ENCODE measurements at regions of chr6 and their contacts with region 1.

Region 1: GRCh38 chr6:42104095-42104806 is 38.2 kb downstream of the C6orf132 start:
- DNase-seq: peak; percentile 77
- H3K4me3 Mint-ChIP-seq: peak overlapping the region; percentile 60
- H3K27ac Mint-ChIP-seq: peak overlapping the region; percentile 52
- H3K4me1 Mint-ChIP-seq: peaks cover 19% of the 10 kb centered on the region
- H3K27me3 Mint-ChIP-seq: peaks cover 54% of the 10 kb centered on the region

Region 2: GRCh38 chr6:41756354-41756753 is 347.9 kb before region 1 on chr6:
- CTCF ChIA-PET with region 1: no interaction called
- DNase-seq: peak; percentile 40
- H3K4me3 Mint-ChIP-seq: no peak overlapping the region
- H3K27ac Mint-ChIP-seq: no peak overlapping the region
- H3K4me1 Mint-ChIP-seq: no peaks in the 10 kb centered on the region
- H3K27me3 Mint-ChIP-seq: peaks cover 22% of the 10 kb centered on the region

Region 3: DNA sequence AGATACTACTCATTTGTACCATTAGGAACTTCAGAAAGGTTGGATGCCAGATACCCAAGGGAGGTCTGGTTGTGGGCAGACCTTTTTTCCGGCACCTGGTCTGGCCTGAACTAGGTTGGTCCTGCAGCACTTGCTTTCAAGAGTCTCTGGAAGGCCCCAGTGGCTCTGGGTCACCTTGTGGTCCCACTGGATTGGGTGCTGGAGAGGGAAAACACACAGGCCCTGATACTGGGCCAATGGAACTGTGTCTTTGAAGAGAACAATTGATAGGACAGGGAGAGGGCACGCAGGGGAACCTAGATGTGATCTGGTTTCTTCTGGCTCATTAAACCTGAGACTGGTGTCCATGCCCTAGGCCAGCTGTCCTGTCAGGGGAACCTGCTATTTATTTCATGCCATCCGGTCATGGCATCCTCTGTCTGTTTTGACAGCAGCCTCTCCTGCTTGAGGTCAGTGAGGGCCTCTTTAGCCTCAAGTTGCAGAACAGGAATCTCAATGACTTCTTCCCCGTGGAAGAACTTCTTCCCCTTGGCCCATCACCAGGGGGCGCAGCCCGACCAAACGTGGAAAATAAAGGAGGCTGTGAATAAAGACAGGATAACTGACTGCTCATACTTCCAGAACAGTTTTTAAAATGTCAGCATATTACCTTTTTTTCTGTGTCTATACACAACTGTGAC is 29.0 kb before region 1 on chr6:
- CTCF ChIA-PET with region 1: interaction called, 10 read pairs
- DNase-seq: peak; percentile 71
- H3K4me3 Mint-ChIP-seq: no peak overlapping the region
- H3K27ac Mint-ChIP-seq: no peak overlapping the region
- H3K4me1 Mint-ChIP-seq: no peaks in the 10 kb centered on the region
- H3K27me3 Mint-ChIP-seq: no peaks in the 10 kb centered on the region

Region 4: DNA sequence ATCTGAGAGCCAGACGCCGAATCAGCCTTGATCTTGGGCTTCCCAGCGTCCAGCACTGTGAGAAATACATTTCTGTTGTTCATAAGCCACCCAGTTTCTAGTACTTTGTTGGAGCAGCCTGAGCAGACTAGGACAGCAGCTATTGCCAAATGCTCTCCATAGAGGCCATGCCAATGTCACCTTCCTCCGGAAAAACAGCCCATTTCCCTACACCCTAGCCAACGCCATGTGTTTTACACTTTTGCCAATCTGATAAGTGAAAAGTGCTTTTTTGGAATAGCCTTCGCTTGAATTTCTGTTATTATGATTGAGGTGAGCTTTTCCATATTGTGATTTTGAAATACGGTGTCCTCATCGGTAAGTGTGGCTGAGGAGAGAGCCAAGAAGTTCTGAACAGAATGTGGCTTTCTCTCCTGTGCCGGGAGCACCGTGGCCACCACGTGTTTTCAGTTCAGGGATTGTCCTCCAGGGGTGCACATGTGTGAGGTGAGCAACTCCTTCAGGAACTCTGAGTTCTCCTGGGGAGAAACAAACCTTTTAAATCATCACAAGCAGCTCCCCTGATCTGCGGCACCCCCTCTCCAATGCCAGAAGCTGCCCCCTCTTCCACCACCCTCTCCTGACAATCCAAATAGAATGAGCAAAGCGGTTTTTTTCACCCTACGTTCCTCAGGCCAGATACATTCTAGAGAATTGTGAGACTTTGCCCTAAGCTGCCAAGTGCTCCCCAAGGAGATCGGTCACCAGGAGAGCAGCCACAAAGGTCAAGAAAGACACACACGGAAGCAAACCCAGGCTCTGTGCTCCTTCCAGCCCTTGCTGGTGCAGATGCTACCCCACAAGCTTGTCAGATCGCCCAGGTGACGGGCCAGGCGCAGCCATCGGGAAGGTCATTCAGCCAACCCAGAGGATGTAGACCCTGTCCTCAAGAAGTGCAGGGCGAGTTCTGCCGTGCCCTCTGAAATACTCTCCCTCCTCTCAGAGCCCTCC is 17.9 kb before region 1 on chr6:
- CTCF ChIA-PET with region 1: interaction called, 14 read pairs
- DNase-seq: no peak
- H3K4me3 Mint-ChIP-seq: no peak overlapping the region
- H3K27ac Mint-ChIP-seq: no peak overlapping the region
- H3K4me1 Mint-ChIP-seq: no peaks in the 10 kb centered on the region
- H3K27me3 Mint-ChIP-seq: no peaks in the 10 kb centered on the region

Region 5: DNA sequence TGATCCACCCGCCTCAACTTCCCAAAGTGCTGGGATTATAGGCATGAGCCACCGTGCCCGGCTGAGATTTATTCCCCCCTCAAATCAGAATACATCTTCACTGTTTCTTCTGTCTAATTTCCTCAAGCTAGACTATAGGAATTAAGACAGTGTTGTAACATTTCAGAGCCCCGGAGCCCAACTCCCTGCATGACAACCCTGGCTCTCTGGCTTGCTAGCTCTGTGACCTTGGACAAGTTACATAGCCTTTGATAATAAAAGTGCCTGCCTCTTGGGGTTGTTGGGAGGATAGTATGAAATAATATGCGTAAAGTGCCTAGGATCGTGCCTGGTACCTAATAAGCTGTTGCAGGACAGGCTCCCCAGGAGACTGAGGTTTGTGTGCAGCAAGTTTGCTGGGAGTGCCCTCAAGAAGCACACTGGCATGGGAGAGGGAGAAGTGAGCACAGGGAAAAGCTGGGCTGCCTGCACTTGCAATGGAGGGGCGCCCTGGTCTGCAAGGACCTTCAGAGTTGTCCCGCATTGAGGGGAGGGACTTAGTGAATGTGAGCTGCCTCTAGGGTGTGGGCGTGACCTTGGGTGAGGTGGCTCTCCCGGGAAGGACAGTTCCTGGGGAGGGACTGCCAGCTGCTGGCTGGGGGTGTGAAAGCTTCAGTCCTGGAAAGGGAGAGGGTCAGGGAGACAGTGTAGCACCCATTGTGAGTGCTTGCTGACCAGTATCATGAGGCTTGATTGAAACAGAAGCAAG is 10.5 kb before region 1 on chr6:
- CTCF ChIA-PET with region 1: interaction called, 18 read pairs
- DNase-seq: no peak
- H3K4me3 Mint-ChIP-seq: no peak overlapping the region
- H3K27ac Mint-ChIP-seq: no peak overlapping the region
- H3K4me1 Mint-ChIP-seq: no peaks in the 10 kb centered on the region
- H3K27me3 Mint-ChIP-seq: peaks cover 9% of the 10 kb centered on the region

Region 6: GRCh38 chr6:42166444-42167141 is 62.3 kb after region 1 on chr6:
- CTCF ChIA-PET with region 1: interaction called, 12 read pairs
- DNase-seq: peak; percentile 87
- H3K4me3 Mint-ChIP-seq: no peak overlapping the region
- H3K27ac Mint-ChIP-seq: no peak overlapping the region
- H3K4me1 Mint-ChIP-seq: peaks cover 4% of the 10 kb centered on the region
- H3K27me3 Mint-ChIP-seq: peaks cover 40% of the 10 kb centered on the region